ENCODE measurements at regions of chr21 and their contacts with region 1.

Region 1: GRCh38 chr21:36319765-36320420 is at the start of gene MORC3:
- DNase-seq: peak; percentile 94 to 96
- H3K4me3 ChIP-seq: peak within 1 kb of the TSS; percentile 63
- H3K27ac ChIP-seq: peak within 1 kb of the TSS; percentile 65
- H3K4me1 ChIP-seq: peaks cover 7% of the 10 kb centered on the region; the same call in 1 of the 2 replicates
- H3K27me3 ChIP-seq: no peaks in the 10 kb centered on the region
- CTCF ChIP-seq: no peak
- total RNA-seq, gene MORC3: 15.9 and 17.5 TPM in 2 replicates

Region 2: DNA sequence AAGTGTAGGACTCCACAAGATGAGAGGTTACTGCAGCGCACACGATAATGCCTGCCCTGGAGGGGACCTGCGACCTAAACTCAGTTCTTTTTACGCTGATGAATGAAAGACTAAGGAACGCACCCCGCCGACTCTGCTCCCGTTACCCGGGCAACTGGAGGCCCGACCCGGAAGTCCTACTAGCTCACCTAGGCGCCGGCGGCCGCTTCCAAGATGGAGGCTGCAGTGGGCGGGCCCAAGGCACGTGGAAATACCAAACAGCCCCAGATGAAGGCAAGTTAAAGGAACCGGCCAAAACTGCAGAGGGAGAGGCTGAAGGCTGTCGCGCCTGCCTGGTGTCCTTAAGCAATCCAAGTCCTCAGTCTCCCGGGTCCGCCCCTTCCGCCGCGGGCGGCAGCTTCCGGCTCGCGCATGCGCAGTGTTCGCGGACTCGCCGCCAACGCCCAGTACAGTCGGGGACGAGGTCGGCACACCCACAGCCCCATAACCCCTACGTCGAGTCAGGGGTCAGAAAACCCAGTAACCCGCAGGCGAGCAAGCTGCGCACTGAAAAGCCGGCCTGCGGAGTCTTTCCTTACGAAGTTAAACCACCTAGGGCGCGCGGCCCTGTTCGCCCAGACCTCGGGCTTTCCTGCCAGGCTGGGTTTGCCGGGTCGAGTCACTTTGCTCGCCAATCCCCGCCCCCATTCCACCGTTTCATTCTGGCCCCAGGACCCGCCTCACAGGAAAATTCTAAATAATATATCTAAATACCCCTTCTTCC is 259.6 kb before region 1 on chr21 and contains the start of gene SETD4:
- CTCF ChIA-PET with region 1: no interaction called
- POLR2A ChIA-PET with region 1: interaction called, 12 read pairs
- intact Hi-C with region 1: no loop called
- DNase-seq: peak; percentile 86 to 91
- H3K4me3 ChIP-seq: peak within 1 kb of the TSS; percentile 96
- H3K27ac ChIP-seq: peak within 1 kb of the TSS; percentile 81
- H3K4me1 ChIP-seq: peaks cover 16% of the 10 kb centered on the region
- H3K27me3 ChIP-seq: no peaks in the 10 kb centered on the region
- CTCF ChIP-seq: no peak
- total RNA-seq, gene SETD4: 24.2 and 27.3 TPM in 2 replicates

Region 3: DNA sequence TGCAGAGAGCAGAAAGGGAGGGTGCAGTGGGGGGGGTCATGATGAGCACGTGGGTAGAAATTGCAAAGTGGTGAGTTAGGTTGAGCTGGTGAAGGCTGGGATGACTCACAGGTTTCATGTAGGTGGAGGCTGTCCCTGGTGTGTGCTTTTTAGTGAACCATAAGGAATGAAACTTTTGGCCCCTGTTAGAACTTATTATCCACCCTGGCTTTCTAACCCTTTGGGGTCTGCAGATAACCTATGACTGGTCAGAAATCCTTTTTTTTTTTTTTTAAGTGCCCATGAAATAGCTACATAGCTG is 116.3 kb before region 1 on chr21:
- CTCF ChIA-PET with region 1: interaction called, 8 read pairs
- POLR2A ChIA-PET with region 1: interaction called, 19 read pairs
- intact Hi-C with region 1: loop called (anchors 5 kb)
- DNase-seq: peak; percentile 57 to 78
- H3K4me3 ChIP-seq: no peak overlapping the region
- H3K27ac ChIP-seq: peak overlapping the region; percentile 90
- H3K4me1 ChIP-seq: peaks cover 51% of the 10 kb centered on the region
- H3K27me3 ChIP-seq: no peaks in the 10 kb centered on the region
- CTCF ChIP-seq: no peak

Region 4: DNA sequence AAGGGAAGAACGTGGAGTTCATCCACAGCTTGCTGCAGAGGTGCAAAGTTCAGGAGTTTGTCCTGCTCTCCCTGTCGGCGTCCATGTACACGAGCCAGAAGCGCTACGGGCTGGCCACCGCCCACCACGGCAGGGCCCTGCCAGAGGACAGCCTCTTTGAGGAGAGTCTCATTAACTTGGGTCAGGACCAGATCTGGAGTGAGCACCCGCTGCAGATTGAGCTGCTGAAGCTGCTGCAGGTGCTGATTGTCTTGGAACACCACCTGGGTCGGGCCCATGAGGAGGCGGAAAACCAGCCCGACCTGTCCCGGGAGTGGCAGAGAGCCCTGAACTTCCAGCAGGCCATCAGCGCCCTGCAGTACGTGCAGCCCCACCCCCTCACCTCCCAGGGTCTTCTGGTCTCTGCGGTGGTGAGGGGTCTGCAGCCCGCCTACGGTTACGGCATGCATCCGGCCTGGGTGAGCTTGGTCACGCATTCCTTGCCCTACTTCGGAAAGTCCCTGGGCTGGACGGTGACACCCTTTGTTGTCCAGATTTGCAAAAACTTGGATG is 73.7 kb before region 1 on chr21:
- CTCF ChIA-PET with region 1: no interaction called
- POLR2A ChIA-PET with region 1: no interaction called
- intact Hi-C with region 1: no loop called
- DNase-seq: peak in 1 of 2 experiments; percentile 33
- H3K4me3 ChIP-seq: no peak overlapping the region
- H3K27ac ChIP-seq: no peak overlapping the region
- H3K4me1 ChIP-seq: no peaks in the 10 kb centered on the region
- H3K27me3 ChIP-seq: no peaks in the 10 kb centered on the region
- CTCF ChIP-seq: no peak

Region 5: GRCh38 chr21:36263797-36264196 is 56.1 kb before region 1 on chr21:
- CTCF ChIA-PET with region 1: no interaction called
- POLR2A ChIA-PET with region 1: interaction called, 5 read pairs
- intact Hi-C with region 1: loop called (anchors 2 kb)
- DNase-seq: no peak
- H3K4me3 ChIP-seq: no peak overlapping the region
- H3K27ac ChIP-seq: no peak overlapping the region
- H3K4me1 ChIP-seq: peaks cover 5% of the 10 kb centered on the region
- H3K27me3 ChIP-seq: no peaks in the 10 kb centered on the region
- CTCF ChIP-seq: no peak

Region 6: DNA sequence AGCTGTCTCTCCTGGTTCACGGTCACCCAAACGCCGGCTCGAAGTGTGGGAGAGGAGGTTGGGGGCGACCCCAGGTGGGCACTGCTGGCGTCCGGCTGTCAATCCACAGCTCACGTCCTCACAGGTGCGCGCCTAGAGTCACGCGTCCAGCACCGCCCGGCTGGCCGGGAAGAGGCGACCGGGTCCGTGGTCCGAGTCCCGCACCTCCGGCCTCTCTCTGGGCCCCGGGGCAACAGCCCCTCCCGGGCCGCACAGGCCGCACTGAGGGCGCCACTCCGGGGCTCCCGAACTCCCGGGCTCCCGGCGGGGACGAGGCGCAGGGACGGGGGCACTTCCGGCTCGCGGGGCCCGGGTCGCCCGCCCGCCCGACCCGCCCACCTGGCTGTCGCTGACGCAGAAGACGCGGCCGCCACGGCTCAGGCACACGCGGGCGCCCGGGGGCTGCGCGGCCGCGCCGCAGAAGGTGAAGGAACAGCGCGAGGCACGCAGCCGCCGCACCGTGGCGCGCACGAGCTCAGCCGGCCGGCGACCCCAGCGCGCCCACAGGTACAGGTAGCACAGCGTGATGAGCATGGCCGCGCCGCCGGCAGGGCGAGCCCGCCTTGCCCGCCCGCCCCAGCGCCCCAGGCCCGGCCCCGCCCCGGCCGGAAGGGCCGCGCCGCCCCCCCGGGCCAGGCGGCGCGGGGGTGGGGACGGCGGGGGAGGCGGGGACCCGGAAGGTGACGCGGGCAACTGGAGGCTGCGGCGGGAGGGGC is 646.4 kb after region 1 on chr21 and contains the start of gene HLCS:
- CTCF ChIA-PET with region 1: no interaction called
- POLR2A ChIA-PET with region 1: interaction called, 15 read pairs
- intact Hi-C with region 1: no loop called
- DNase-seq: peak; percentile 62 to 76
- H3K4me3 ChIP-seq: peak within 1 kb of the TSS; percentile 75
- H3K27ac ChIP-seq: peak within 1 kb of the TSS; percentile 76
- H3K4me1 ChIP-seq: peaks cover 14% of the 10 kb centered on the region; the same call in 1 of the 2 replicates
- H3K27me3 ChIP-seq: no peaks in the 10 kb centered on the region
- CTCF ChIP-seq: no peak
- total RNA-seq, gene HLCS: 21.6 and 22.1 TPM in 2 replicates

Region 7: DNA sequence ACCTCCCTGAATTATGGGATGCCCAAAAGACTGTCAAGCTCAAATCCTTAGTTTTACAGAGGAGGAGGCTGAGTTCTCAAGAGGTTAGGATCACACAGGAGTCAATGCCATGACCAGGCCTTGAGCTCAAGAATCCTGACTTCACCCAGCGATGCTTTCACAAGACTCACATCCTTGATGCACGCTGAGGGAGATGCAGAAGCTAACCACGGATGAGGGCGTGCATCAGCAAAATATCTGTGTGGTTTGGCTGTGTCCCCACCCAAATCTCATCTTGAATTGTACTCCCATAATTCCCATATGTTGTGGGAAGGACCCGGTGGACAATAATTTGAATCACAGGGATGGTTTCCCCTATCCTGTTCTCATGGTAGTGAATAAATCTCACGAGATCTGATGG is 1463.1 kb after region 1 on chr21:
- CTCF ChIA-PET with region 1: no interaction called
- POLR2A ChIA-PET with region 1: interaction called, 14 read pairs
- intact Hi-C with region 1: no loop called
- DNase-seq: no peak
- H3K4me3 ChIP-seq: no peak overlapping the region
- H3K27ac ChIP-seq: no peak overlapping the region
- H3K4me1 ChIP-seq: no peaks in the 10 kb centered on the region
- H3K27me3 ChIP-seq: no peaks in the 10 kb centered on the region; the same call in 1 of the 2 replicates
- CTCF ChIP-seq: no peak

Measured in PC-9 (cell line).